ENCODE measurements at regions of chrX and their contacts with region 1.

Region 1: GRCh38 chrX:46758906-46759644 is at the start of gene SLC9A7:
- DNase-seq: peak; percentile 64 to 77
- ATAC-seq: peak; percentile 79 to 92 (median 88)
- H3K4me3 ChIP-seq: peak within 1 kb of the TSS in 9 of 10 donors; percentile 34 to 56 (median 53)
- H3K27ac ChIP-seq: no peak within 1 kb of the TSS
- H3K4me1 ChIP-seq: peaks cover 0 to 7% (median 0%) of the 10 kb centered on the region in 9 donors
- H3K27me3 ChIP-seq: peaks cover 0 to 39% (median 0%) of the 10 kb centered on the region in 7 donors
- CTCF ChIP-seq: peak; percentile 61 to 82 (median 79)
- total RNA-seq, gene SLC9A7: 0.71 to 7.5 (median 2.2) TPM

Region 2: GRCh38 chrX:46796574-46797191 is 37.6 kb after region 1 on chrX:
- intact Hi-C with region 1: loop called in 9 of 10 experiments (anchors 1 to 5 kb)
- DNase-seq: peak; percentile 65 to 66
- ATAC-seq: peak in 7 of 8 donors; percentile 49 to 83 (median 67)
- H3K4me3 ChIP-seq: no peak overlapping the region
- H3K27ac ChIP-seq: no peak overlapping the region
- H3K4me1 ChIP-seq: peaks cover 0 to 16% (median 0%) of the 10 kb centered on the region in 9 donors
- H3K27me3 ChIP-seq: peaks cover 0 to 17% (median 0%) of the 10 kb centered on the region in 7 donors
- CTCF ChIP-seq: peak; percentile 42 to 81 (median 72)

Region 3: DNA sequence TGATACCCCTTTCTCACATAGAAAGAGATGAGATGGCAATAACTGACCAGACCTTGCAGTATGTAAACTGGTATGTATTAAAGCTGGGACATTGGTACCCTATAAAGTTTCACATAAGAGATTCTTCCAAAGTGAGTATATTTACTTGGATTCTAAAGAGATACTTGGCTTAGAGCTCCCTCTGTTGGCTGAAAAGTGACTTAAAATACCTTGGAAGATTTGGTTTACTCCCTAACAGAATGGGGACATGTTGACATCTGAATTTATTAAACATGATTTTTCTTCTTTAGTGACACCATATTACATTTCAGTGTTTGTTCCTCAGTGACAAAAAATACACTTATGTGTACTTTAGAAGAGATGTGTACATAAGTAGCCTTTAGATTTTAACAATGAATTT is 271.3 kb after region 1 on chrX:
- intact Hi-C with region 1: loop called in 3 of 10 experiments (anchors 5 to 10 kb)
- DNase-seq: peak in 1 of 2 donors; percentile 32
- ATAC-seq: peak in 1 of 8 donors; percentile 33
- H3K4me3 ChIP-seq: no peak overlapping the region
- H3K27ac ChIP-seq: no peak overlapping the region
- H3K4me1 ChIP-seq: no peaks in the 10 kb centered on the region
- H3K27me3 ChIP-seq: peaks cover 0 to 51% (median 0%) of the 10 kb centered on the region in 7 donors
- CTCF ChIP-seq: peak; percentile 24 to 73 (median 59)

Region 4: GRCh38 chrX:47093248-47093647 is 334.2 kb after region 1 on chrX:
- intact Hi-C with region 1: loop called in 1 of 10 experiments (anchors 2 kb)
- DNase-seq: no peak
- ATAC-seq: no peak
- H3K4me3 ChIP-seq: no peak overlapping the region
- H3K27ac ChIP-seq: no peak overlapping the region
- H3K4me1 ChIP-seq: no peaks in the 10 kb centered on the region
- H3K27me3 ChIP-seq: peaks cover 0 to 38% (median 0%) of the 10 kb centered on the region in 7 donors
- CTCF ChIP-seq: peak in 8 of 9 donors; percentile 8 to 60 (median 45)

Measured in heart right ventricle (tissue), 16 donors.